Activated T-helper 2 cell treated with anti-CD3 and anti-CD28 coated beads, Interferon-gamma antibody, Interleukin-2, Interleukin-4, amounts not matched to agents 10 μg/mL and 5 μg/mL and 100 μg/mL, durations not matched to agents 14 hours and 24 hours and 36 hours (primary cell): ENCODE measurements at regions of chr1 and their contacts with region 1.

Region 1: GRCh38 chr1:41812051-41812450 is 106.7 kb downstream of the HIVEP3 start:
- DNase-seq: peak; percentile 49
- H3K4me3 Mint-ChIP-seq: no peak overlapping the region
- H3K27ac Mint-ChIP-seq: no peak overlapping the region
- H3K4me1 Mint-ChIP-seq: peaks cover 49% of the 10 kb centered on the region
- H3K27me3 Mint-ChIP-seq: no peaks in the 10 kb centered on the region

Region 2: DNA sequence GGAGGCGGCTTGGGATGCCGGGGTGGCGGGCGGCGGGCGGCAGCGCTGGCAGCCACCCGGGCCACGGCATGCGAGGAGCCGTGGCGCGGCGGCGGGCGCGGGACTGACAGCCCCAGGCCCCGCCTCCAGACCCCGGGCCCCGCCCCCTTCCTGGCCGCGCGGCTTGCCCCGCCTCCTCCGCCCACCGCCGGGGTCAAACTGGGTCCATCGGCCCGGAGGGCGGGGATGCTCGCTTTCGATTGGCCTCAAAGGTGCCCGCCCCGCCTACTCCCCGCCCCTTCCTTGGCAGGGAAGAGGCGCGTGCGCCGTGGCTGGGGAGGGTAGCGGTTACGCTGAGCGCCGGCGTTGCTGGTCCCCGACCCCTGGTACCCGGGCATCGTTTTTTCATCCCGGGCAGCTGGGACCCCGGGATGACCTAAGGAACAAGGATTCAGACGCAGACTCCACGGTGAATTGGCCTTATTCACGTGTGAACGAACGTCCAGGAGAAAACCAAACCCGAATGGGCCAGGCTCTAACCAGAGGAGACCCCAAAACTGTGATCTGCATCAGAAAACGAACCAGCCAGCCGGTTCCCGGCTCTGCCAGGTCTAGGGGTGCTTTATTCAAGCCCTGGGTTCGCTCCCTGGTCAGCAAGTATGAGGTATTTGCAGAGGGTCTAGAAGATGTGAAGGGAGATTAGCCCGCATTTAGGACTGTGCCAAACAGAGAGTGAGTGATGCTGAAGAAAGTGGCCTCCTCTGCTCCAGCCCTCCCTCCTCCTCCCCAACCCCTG is 224.0 kb after region 1 on chr1:
- intact Hi-C with region 1: loop called (anchors 5 kb)
- DNase-seq: peak; percentile 94
- H3K4me3 Mint-ChIP-seq: peak overlapping the region; percentile 78
- H3K27ac Mint-ChIP-seq: no peak overlapping the region
- H3K4me1 Mint-ChIP-seq: peaks cover 17% of the 10 kb centered on the region
- H3K27me3 Mint-ChIP-seq: peaks cover 14% of the 10 kb centered on the region